ENCODE measurements at regions of chr12 and their contacts with region 1.

Region 1: GRCh38 chr12:110689281-110690126 is 589 bp upstream of the HVCN1 start:
- DNase-seq: peak; percentile 81
- ATAC-seq: peak; percentile 80
- H3K4me3 Mint-ChIP-seq: peak overlapping the region; percentile 95
- H3K27ac Mint-ChIP-seq: peak overlapping the region; percentile 100
- H3K4me1 Mint-ChIP-seq: peaks cover 54% of the 10 kb centered on the region
- H3K27me3 Mint-ChIP-seq: no peaks in the 10 kb centered on the region

Region 2: DNA sequence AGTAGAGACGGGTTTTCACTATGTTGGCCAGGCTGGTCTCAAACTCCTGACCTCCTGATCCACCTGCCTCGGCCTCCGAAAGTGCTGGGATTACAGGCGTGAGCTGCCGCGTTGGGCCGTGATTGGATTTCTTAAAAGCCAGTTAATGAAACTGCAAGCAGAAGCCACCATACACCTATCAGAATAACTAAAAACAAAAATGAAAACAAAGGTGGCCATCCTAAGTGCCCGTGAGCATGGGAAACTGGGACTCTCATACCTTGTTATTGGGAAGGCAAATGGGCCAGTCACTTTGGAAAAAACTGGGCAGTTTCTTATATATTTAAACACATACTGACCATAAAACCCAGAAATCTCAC is 83.3 kb before region 1 on chr12:
- POLR2A ChIA-PET with region 1: interaction called, 15 read pairs
- DNase-seq: no peak
- ATAC-seq: no peak
- H3K4me3 Mint-ChIP-seq: peak overlapping the region; percentile 79
- H3K27ac Mint-ChIP-seq: peak overlapping the region; percentile 80
- H3K4me1 Mint-ChIP-seq: peaks cover 12% of the 10 kb centered on the region
- H3K27me3 Mint-ChIP-seq: no peaks in the 10 kb centered on the region

Region 3: DNA sequence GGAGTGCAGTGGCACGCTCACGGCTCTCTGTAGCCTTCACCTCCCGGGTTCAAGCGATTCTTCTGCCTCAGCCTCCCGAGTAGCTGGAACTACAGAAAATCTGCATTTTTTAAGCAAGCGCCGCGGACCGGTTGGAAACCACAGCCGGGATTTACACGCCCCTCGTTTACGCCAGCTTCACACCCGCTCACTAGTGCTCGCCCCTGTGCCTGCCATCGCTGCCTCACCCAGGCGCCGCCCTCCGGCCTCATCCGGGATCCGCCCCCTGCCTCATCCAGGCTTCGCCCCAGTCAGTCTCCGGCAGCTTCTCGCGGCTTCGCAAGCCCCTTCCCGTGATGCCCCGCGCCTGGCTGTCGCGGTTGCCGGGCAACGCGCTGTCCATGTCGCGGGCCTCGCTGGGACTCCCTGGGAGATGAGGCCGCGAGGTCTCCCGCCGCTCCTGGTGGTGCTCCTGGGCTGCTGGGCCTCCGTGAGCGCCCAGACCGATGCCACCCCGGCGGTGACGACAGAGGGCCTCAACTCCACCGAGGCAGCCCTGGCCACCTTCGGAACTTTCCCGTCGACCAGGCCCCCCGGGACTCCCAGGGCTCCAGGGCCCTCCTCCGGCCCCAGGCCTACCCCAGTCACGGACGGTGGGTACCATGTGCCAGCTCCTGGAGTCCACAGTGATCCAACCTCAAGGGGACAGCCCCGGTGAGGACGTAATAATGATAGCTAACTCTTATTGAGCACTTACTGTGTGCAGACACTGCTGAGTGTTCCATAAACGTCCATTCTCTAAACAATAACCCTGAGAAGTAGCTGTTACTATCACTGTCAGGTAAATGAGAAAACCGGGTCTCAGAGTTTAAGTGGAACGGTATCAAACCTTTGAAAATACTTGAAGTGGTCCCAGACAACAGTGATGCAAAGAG is 75.5 kb before region 1 on chr12 and contains the start of gene TCTN1:
- POLR2A ChIA-PET with region 1: interaction called, 23 read pairs
- DNase-seq: peak; percentile 97
- ATAC-seq: peak; percentile 100
- H3K4me3 Mint-ChIP-seq: peak within 1 kb of the TSS; percentile 85
- H3K27ac Mint-ChIP-seq: peak within 1 kb of the TSS; percentile 89
- H3K4me1 Mint-ChIP-seq: peaks cover 8% of the 10 kb centered on the region
- H3K27me3 Mint-ChIP-seq: peaks cover 2% of the 10 kb centered on the region
- total RNA-seq, gene TCTN1: 10.1 to 10.3 TPM

Region 4: GRCh38 chr12:110677206-110677911 is 12.1 kb before region 1 on chr12:
- POLR2A ChIA-PET with region 1: interaction called, 12 read pairs
- DNase-seq: no peak
- ATAC-seq: peak; percentile 57
- H3K4me3 Mint-ChIP-seq: peak overlapping the region; percentile 72
- H3K27ac Mint-ChIP-seq: peak overlapping the region; percentile 93
- H3K4me1 Mint-ChIP-seq: peaks cover 50% of the 10 kb centered on the region
- H3K27me3 Mint-ChIP-seq: no peaks in the 10 kb centered on the region